GM12878 (cell line): ENCODE measurements at regions of chr6 and their contacts with region 1.

Region 1: DNA sequence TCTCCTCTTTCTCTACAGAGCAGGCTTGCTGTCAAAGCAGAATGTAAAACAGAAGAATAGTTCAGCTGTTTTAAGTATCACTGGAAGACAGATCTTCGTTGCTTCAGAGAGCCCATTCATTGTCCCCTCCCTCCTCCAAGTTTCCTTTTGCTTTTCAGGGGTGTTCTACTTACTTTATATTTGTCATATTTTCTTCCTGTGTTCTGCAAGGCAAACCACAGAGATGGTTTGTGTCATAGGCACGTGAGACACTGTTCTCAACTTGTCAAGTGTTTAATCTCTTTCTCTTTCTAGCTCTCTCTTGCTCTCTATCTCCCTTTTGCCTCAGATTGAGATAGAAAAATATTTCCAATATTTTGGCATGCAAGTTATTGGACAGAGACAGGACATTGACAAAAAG is 228.9 kb upstream of the DEFB112 start:
- DNase-seq: no peak
- ATAC-seq: peak; percentile 77
- H3K4me3 ChIP-seq: no peak overlapping the region
- H3K27ac ChIP-seq: no peak overlapping the region
- H3K4me1 ChIP-seq: no peaks in the 10 kb centered on the region
- H3K27me3 ChIP-seq: no peaks in the 10 kb centered on the region
- CTCF ChIP-seq: no peak
- EP300 ChIP-seq: no peak
- POLR2A ChIP-seq: no peak
- RAD21 ChIP-seq: no peak

Region 2: DNA sequence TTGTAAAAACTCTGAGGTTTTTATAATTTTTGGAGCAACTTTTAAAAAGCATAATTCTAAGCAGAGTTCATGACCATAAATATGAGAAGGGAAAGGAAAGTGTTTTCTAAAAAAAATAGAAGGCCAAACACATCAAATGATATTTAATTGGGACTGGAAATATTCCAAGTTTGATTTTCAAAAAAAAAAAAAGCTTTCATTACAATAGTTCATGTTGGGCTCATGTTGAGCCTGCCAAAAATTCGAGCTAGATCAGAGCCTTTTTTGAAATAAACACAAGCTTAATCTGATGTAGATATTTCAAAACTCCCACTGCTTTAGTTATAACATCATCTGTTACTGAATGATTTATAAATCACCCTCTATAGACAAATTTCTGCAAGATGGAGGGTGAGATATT is 65.5 kb before region 1 on chr6:
- CTCF ChIA-PET with region 1: no interaction called
- POLR2A ChIA-PET with region 1: no interaction called
- RAD21 ChIA-PET with region 1: no interaction called
- SMC1A ChIA-PET with region 1: no interaction called
- in situ Hi-C with region 1: no loop called
- intact Hi-C with region 1: no loop called
- DNase-seq: no peak
- ATAC-seq: no peak
- H3K4me3 ChIP-seq: no peak overlapping the region
- H3K27ac ChIP-seq: no peak overlapping the region
- H3K4me1 ChIP-seq: no peaks in the 10 kb centered on the region
- H3K27me3 ChIP-seq: no peaks in the 10 kb centered on the region
- CTCF ChIP-seq: no peak
- EP300 ChIP-seq: no peak
- POLR2A ChIP-seq: no peak
- RAD21 ChIP-seq: no peak

Region 3: GRCh38 chr6:50288881-50289280 is 10.2 kb after region 1 on chr6:
- CTCF ChIA-PET with region 1: interaction called, 6 read pairs
- POLR2A ChIA-PET with region 1: no interaction called
- RAD21 ChIA-PET with region 1: interaction called, 11 read pairs
- SMC1A ChIA-PET with region 1: interaction called, 8 read pairs
- in situ Hi-C with region 1: no loop called
- intact Hi-C with region 1: no loop called
- DNase-seq: no peak
- ATAC-seq: no peak
- H3K4me3 ChIP-seq: no peak overlapping the region
- H3K27ac ChIP-seq: no peak overlapping the region
- H3K4me1 ChIP-seq: no peaks in the 10 kb centered on the region
- H3K27me3 ChIP-seq: no peaks in the 10 kb centered on the region
- CTCF ChIP-seq: no peak
- EP300 ChIP-seq: no peak
- POLR2A ChIP-seq: no peak
- RAD21 ChIP-seq: no peak